CD14-positive monocyte (primary cell): ENCODE measurements at regions of chr12 and their contacts with region 1.

Region 1: GRCh38 chr12:6792522-6793201 is 3.3 kb downstream of the CD4 start:
- DNase-seq: peak; percentile 82 to 90 (median 87)
- H3K4me3 ChIP-seq: peak overlapping the region; percentile 65 to 97 (median 96)
- H3K4me3 Mint-ChIP-seq: peak overlapping the region; percentile 94 to 100
- H3K27ac ChIP-seq: peak overlapping the region; percentile 94
- H3K27ac Mint-ChIP-seq: peak overlapping the region; percentile 96 to 99 (median 98)
- H3K4me1 ChIP-seq: peaks cover 50 to 57% of the 10 kb centered on the region in 2 donors
- H3K4me1 Mint-ChIP-seq: peaks cover 56% of the 10 kb centered on the region
- H3K27me3 ChIP-seq: no peaks in the 10 kb centered on the region
- H3K27me3 Mint-ChIP-seq: peaks cover 0 to 2% (median 0%) of the 10 kb centered on the region in 3 donors
- CTCF ChIP-seq: no peak

Region 2: GRCh38 chr12:6752921-6753771 is 39.5 kb before region 1 on chr12 and contains the start of gene MLF2:
- intact Hi-C with region 1: loop called in 1 of 2 experiments (anchors 5 kb)
- DNase-seq: peak; percentile 96 to 98 (median 98)
- H3K4me3 ChIP-seq: peak within 1 kb of the TSS; percentile 89 to 97 (median 90)
- H3K4me3 Mint-ChIP-seq: peak within 1 kb of the TSS; percentile 91 to 95
- H3K27ac ChIP-seq: peak within 1 kb of the TSS; percentile 97 to 98
- H3K27ac Mint-ChIP-seq: peak within 1 kb of the TSS; percentile 96 to 100 (median 99)
- H3K4me1 ChIP-seq: peaks cover 25% of the 10 kb centered on the region in 2 donors
- H3K4me1 Mint-ChIP-seq: peaks cover 29% of the 10 kb centered on the region
- H3K27me3 ChIP-seq: no peaks in the 10 kb centered on the region
- H3K27me3 Mint-ChIP-seq: peaks cover 4% of the 10 kb centered on the region in 3 donors
- CTCF ChIP-seq: no peak
- polyA plus RNA-seq, gene MLF2: 113 to 211 (median 140) TPM